Activated CD4-positive, alpha-beta memory T cell treated with anti-CD3 and anti-CD28 coated beads for 36 hours (primary cell): ENCODE measurements at regions of chr2 and their contacts with region 1.

Region 1: DNA sequence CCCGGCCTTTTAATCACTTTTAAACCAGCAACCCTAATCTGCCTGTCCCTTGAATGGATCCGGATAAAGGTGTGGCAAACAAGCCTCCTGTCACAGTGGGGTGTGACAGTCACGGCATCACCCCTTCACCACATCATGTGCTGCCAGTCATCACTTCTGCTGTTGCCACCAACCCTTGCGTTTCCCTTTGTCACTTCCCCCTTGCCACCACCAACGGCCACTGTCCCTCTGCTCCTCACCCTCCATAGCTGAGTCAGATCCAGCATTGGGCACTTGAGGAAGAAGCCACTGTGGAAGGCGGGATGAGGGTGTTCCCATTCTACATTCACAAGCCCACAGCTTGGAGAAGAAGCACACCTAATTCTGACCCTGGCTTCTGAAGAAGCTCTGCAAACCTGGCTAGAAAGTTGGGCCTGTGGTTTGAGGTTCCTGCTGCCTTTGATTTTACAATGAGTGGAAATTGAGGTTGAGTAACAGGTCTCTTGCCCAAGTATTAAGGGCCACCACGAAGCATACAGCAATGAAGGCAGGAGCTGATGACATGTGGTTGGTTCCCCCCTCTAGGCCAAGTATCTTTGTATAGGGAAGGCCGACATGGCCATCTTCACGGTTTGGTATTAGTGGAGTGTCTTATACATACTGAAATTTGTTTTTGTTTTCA is 22.9 kb upstream of the DARS1 start:
- DNase-seq: peak; percentile 87
- H3K4me3 Mint-ChIP-seq: no peak overlapping the region
- H3K27ac Mint-ChIP-seq: peak overlapping the region; percentile 72
- H3K4me1 Mint-ChIP-seq: peaks cover 49% of the 10 kb centered on the region
- H3K27me3 Mint-ChIP-seq: no peaks in the 10 kb centered on the region

Region 2: DNA sequence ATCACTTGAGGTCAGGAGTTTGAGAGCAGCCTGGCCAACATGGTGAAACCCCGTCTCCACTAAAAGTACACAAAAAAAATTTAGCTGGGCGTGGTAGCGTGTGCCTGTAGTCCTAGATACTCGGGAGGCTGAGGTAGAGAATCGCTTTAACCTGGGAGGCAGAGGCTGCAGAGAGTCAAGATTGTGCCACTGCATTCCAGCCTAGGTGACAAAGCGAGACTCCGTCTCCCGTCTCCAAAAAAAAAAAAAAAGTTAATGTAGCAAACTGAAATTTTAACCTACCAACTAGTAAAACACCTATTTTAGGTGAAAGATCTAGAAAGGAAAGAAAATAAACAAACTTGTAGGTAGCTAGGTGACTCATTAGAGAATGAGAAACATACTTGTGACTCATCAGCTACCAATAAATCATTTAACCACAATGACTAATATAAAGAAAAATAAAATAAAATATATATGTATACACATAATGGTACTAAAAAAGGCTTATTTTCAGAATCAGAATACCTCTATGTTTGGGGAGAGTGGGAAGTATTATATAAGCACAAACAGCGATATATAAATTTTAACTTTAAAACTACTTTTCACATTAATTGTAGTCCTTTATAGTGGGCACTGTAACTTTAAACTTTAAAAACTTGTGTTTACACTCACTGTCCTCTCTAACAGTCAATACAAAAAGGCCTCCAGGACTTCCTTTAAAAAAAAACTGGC is 59.5 kb before region 1 on chr2:
- CTCF ChIA-PET with region 1: no interaction called
- POLR2A ChIA-PET with region 1: no interaction called
- intact Hi-C with region 1: loop called (anchors 2 kb)
- DNase-seq: peak; percentile 55
- H3K4me3 Mint-ChIP-seq: peak overlapping the region; percentile 53
- H3K27ac Mint-ChIP-seq: peak overlapping the region; percentile 87
- H3K4me1 Mint-ChIP-seq: peaks cover 64% of the 10 kb centered on the region
- H3K27me3 Mint-ChIP-seq: no peaks in the 10 kb centered on the region

Region 3: GRCh38 chr2:135960656-135961551 is 47.4 kb before region 1 on chr2:
- CTCF ChIA-PET with region 1: no interaction called
- POLR2A ChIA-PET with region 1: no interaction called
- intact Hi-C with region 1: loop called (anchors 1 kb)
- DNase-seq: peak; percentile 37
- H3K4me3 Mint-ChIP-seq: peak overlapping the region; percentile 1
- H3K27ac Mint-ChIP-seq: peak overlapping the region; percentile 75
- H3K4me1 Mint-ChIP-seq: peaks cover 59% of the 10 kb centered on the region
- H3K27me3 Mint-ChIP-seq: no peaks in the 10 kb centered on the region

Region 4: GRCh38 chr2:136052369-136053362 is 44.3 kb after region 1 on chr2:
- CTCF ChIA-PET with region 1: interaction called, 3 read pairs
- POLR2A ChIA-PET with region 1: interaction called, 9 read pairs
- intact Hi-C with region 1: loop called (anchors 1 kb)
- DNase-seq: peak; percentile 35
- H3K4me3 Mint-ChIP-seq: peak overlapping the region; percentile 57
- H3K27ac Mint-ChIP-seq: peak overlapping the region; percentile 99
- H3K4me1 Mint-ChIP-seq: peaks cover 86% of the 10 kb centered on the region
- H3K27me3 Mint-ChIP-seq: no peaks in the 10 kb centered on the region

Region 5: GRCh38 chr2:136212423-136213378 is 204.4 kb after region 1 on chr2:
- CTCF ChIA-PET with region 1: no interaction called
- POLR2A ChIA-PET with region 1: no interaction called
- intact Hi-C with region 1: loop called (anchors 5 kb)
- DNase-seq: peak; percentile 61
- H3K4me3 Mint-ChIP-seq: no peak overlapping the region
- H3K27ac Mint-ChIP-seq: peak overlapping the region; percentile 59
- H3K4me1 Mint-ChIP-seq: peaks cover 46% of the 10 kb centered on the region
- H3K27me3 Mint-ChIP-seq: no peaks in the 10 kb centered on the region